ENCODE measurements at regions of chr10 and their contacts with region 1.

Region 1: DNA sequence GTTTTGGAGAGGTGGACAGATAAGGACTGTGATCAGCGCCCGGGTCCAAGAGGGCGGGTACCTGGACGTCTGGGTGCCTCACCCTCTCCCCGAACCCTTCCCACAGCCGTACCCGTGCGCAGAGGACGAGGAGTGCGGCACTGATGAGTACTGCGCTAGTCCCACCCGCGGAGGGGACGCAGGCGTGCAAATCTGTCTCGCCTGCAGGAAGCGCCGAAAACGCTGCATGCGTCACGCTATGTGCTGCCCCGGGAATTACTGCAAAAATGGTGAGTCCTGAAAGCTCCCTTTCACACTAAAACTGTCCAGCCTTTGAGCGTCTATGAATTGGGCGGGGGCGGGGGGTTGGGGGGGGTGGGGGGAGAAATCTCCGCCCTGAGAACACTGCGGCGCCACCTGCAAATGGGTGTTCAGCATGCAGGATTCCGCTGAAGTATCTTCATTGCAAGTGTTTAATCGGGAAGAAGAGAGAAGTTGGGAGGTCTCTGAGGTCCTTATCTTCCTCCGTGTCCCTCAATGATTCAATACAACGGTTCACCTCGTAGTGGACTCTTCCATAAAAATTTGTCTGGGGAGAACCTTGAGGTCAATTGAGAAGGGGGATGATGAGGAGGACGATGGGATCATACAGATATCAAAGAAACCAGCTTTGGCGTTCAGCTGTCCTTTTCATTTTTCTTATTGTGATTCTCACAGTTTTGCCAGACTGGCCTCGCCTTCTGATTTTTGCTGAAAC is 904 bp downstream of the DKK1 start:
- DNase-seq: no peak
- ATAC-seq: peak; percentile 2 to 30 (median 24)
- H3K4me3 ChIP-seq: peak overlapping the region; percentile 74
- H3K27ac ChIP-seq: no peak overlapping the region
- H3K4me1 ChIP-seq: no peaks in the 10 kb centered on the region
- H3K27me3 ChIP-seq: no peaks in the 10 kb centered on the region
- CTCF ChIP-seq: no peak

Region 2: DNA sequence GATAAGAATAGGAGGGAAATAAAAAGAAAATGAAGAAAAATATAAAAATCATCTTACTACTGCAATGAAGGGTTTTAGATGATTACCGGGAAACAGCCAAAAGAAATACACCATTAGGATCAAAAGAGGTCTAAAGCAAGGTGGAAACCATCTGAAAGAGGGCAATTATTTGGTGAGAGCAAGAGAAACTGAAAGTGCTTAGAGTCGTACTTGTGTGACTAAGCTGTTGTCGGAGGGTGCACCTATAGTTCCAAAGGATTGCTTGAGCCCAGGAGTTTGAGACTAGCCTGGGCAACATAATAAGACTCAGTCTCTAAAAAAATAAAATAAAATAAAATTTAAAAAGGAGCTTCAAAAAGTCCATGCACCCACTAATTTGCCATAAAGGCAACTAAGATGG is 168.6 kb after region 1 on chr10:
- intact Hi-C with region 1: loop called in 1 of 2 experiments (anchors 5 kb)
- DNase-seq: no peak
- ATAC-seq: no peak
- H3K4me3 ChIP-seq: no peak overlapping the region
- H3K27ac ChIP-seq: no peak overlapping the region
- H3K4me1 ChIP-seq: peaks cover 6% of the 10 kb centered on the region
- H3K27me3 ChIP-seq: no peaks in the 10 kb centered on the region
- CTCF ChIP-seq: no peak